Common myeloid progenitor, CD34-positive (primary cell): ENCODE measurements at regions of chr3 and their contacts with region 1.

Region 1: GRCh38 chr3:187112934-187113793 is 26.1 kb downstream of the RPL39L start:
- DNase-seq: peak; percentile 36 to 61 (median 46)
- H3K4me3 ChIP-seq: no peak overlapping the region
- H3K27ac ChIP-seq: no peak overlapping the region
- H3K4me1 ChIP-seq: no peaks in the 10 kb centered on the region
- H3K27me3 ChIP-seq: no peaks in the 10 kb centered on the region

Region 2: DNA sequence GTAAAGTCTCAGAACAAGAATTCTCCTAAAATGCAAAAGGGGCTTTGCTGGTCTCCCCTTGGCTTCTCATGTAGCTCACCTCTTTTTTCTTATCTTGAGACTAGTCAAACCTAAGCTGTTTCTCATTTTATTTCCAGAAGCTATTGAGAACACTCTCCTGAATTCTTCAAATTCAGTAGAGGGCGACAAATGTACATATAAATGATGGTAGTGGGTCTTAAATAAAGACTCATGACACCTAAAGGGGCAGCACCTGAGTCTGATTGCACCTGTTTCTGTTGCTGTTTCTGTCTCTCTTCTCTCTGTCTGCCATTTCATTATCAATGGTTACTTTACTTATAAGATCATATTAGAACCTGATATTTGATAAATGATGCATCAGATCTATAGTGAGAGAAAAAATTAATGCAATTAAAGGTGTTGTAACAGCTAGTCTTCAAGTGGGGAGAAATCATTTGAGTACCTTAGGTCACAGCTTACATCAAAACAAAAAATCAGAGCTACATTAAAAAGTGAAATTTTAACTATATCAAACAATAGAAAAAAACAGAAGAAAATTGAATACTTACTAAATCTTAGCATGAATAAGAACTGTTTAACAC is 263.7 kb before region 1 on chr3:
- CTCF ChIA-PET with region 1: interaction called, 23 read pairs
- POLR2A ChIA-PET with region 1: no interaction called
- DNase-seq: peak; percentile 63 to 76 (median 72)
- H3K4me3 ChIP-seq: no peak overlapping the region
- H3K27ac ChIP-seq: no peak overlapping the region
- H3K4me1 ChIP-seq: peaks cover 0 to 4% (median 0%) of the 10 kb centered on the region in 4 experiments
- H3K27me3 ChIP-seq: no peaks in the 10 kb centered on the region

Region 3: GRCh38 chr3:187101184-187102072 is 11.7 kb before region 1 on chr3:
- CTCF ChIA-PET with region 1: interaction called, 25 read pairs
- POLR2A ChIA-PET with region 1: interaction called, 3 read pairs
- DNase-seq: peak; percentile 72 to 89 (median 88)
- H3K4me3 ChIP-seq: peak overlapping the region in 6 of 7 experiments; percentile 15 to 61 (median 42)
- H3K27ac ChIP-seq: no peak overlapping the region
- H3K4me1 ChIP-seq: peaks cover 6 to 16% (median 11%) of the 10 kb centered on the region in 4 experiments
- H3K27me3 ChIP-seq: no peaks in the 10 kb centered on the region

Region 4: DNA sequence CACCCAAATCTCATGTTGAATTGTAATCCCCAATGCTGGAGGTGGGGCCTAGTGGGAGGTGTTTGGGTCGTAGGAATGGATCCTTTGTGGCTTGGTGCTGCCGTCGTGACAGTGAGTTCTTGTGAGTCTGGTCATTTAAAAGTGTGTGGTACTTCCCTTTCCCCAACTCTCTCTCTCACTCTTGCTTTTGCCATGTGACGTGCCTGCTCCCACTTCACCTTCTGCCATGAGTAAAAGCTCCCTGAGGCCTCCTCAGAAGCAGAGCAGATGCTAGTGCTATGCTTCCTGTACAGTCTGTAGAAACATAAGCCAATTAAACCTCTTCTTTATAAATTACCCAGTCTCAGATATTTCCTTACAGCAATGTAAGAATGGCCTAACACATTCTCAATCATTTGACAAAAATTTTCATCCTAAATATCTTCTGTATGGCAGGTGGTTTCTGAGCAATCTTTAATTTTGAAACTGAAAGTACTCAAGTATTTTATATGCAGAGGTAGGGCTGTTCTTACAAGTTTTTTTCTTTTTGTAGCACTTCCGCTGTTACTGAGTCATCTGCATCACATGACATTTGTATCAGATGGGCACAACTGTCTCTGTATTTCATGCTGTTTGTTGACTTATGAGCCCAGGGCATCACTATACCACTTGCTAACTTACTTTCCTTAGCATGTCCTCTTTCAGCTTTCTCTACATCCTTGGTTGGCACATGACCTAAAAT is 17.3 kb after region 1 on chr3:
- CTCF ChIA-PET with region 1: interaction called, 39 read pairs
- POLR2A ChIA-PET with region 1: no interaction called
- DNase-seq: peak; percentile 84 to 95 (median 92)
- H3K4me3 ChIP-seq: peak overlapping the region in 2 of 7 experiments; percentile 4 to 50
- H3K27ac ChIP-seq: peak overlapping the region in 1 of 2 experiments; percentile 52
- H3K4me1 ChIP-seq: peaks cover 0 to 9% (median 4%) of the 10 kb centered on the region in 4 experiments
- H3K27me3 ChIP-seq: no peaks in the 10 kb centered on the region

Region 5: GRCh38 chr3:187139126-187139894 is 26.1 kb after region 1 on chr3 and contains the start of gene RPL39L:
- CTCF ChIA-PET with region 1: interaction called, 39 read pairs
- POLR2A ChIA-PET with region 1: interaction called, 3 read pairs
- DNase-seq: peak; percentile 86 to 97 (median 95)
- H3K4me3 ChIP-seq: peak within 1 kb of the TSS; percentile 40 to 75 (median 68)
- H3K27ac ChIP-seq: peak within 1 kb of the TSS in 1 of 2 experiments; percentile 58
- H3K4me1 ChIP-seq: peaks cover 0 to 6% (median 4%) of the 10 kb centered on the region in 4 experiments
- H3K27me3 ChIP-seq: no peaks in the 10 kb centered on the region

Region 6: GRCh38 chr3:187150599-187150998 is 37.4 kb after region 1 on chr3:
- CTCF ChIA-PET with region 1: interaction called, 34 read pairs
- POLR2A ChIA-PET with region 1: no interaction called
- DNase-seq: peak; percentile 38 to 65 (median 64)
- H3K4me3 ChIP-seq: no peak overlapping the region
- H3K27ac ChIP-seq: no peak overlapping the region
- H3K4me1 ChIP-seq: no peaks in the 10 kb centered on the region
- H3K27me3 ChIP-seq: no peaks in the 10 kb centered on the region

Region 7: GRCh38 chr3:187164885-187165543 is 51.9 kb after region 1 on chr3:
- CTCF ChIA-PET with region 1: interaction called, 110 read pairs
- POLR2A ChIA-PET with region 1: no interaction called
- DNase-seq: peak; percentile 70 to 88 (median 78)
- H3K4me3 ChIP-seq: no peak overlapping the region
- H3K27ac ChIP-seq: no peak overlapping the region
- H3K4me1 ChIP-seq: peaks cover 0 to under 1% (median 0%) of the 10 kb centered on the region in 4 experiments
- H3K27me3 ChIP-seq: no peaks in the 10 kb centered on the region